Caco-2 (cell line): ENCODE measurements at regions of chr11 and their contacts with region 1.

Region 1: DNA sequence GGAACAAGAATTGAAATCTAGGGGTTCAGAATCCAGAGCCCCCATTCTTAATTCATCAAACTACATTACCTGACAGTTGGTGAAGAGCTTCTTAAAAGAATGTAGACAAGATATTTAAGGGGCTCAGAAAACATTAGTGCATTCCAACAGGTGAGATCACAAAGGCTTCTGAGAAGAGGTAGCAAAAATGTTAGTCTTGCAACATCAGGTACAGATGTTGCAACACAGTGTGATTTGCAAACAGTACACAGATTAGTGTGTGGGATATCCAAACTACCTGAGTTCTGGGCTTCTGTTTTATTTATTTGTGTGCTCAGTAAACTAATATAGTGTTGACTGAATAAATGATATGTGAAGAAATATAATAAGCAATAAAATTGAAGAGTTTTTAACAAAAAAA is 11.8 kb downstream of the CASP4 start:
- DNase-seq: peak in 1 of 2 experiments; percentile 64
- H3K4me3 ChIP-seq: no peak overlapping the region
- H3K4me3 Mint-ChIP-seq: no peak overlapping the region
- H3K27ac Mint-ChIP-seq: peak overlapping the region; percentile 60
- H3K4me1 ChIP-seq: peaks cover 18% of the 10 kb centered on the region
- H3K4me1 Mint-ChIP-seq: peaks cover 14% of the 10 kb centered on the region
- H3K27me3 ChIP-seq: no peaks in the 10 kb centered on the region
- H3K27me3 Mint-ChIP-seq: no peaks in the 10 kb centered on the region
- CTCF ChIP-seq: no peak

Region 2: DNA sequence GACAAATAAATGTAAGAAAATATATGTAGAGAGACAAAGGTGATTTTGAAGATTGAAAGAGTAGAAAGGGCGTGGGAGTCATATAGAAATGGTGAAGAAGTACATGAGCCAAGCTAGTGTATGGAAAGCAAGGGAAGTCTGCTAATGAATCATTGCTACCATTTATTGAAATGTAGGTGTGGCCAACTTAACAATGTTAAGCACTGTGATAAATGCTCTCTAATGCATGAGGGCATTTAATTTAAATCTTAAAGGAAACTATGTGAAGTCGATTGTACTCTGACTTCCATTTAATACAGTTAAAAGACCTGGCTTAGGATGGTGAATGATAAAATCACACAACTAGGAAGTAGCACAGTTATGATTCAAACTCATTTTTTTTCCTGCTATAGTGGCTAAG is 278.1 kb before region 1 on chr11:
- CTCF ChIA-PET with region 1: no interaction called
- POLR2A ChIA-PET with region 1: no interaction called
- intact Hi-C with region 1: no loop called
- DNase-seq: no peak
- H3K4me3 ChIP-seq: no peak overlapping the region
- H3K4me3 Mint-ChIP-seq: no peak overlapping the region
- H3K27ac Mint-ChIP-seq: no peak overlapping the region
- H3K4me1 ChIP-seq: no peaks in the 10 kb centered on the region
- H3K4me1 Mint-ChIP-seq: no peaks in the 10 kb centered on the region
- H3K27me3 ChIP-seq: no peaks in the 10 kb centered on the region
- H3K27me3 Mint-ChIP-seq: no peaks in the 10 kb centered on the region
- CTCF ChIP-seq: no peak

Region 3: GRCh38 chr11:104728927-104729326 is 227.6 kb before region 1 on chr11:
- CTCF ChIA-PET with region 1: no interaction called
- POLR2A ChIA-PET with region 1: no interaction called
- intact Hi-C with region 1: loop called (anchors 10 kb)
- DNase-seq: no peak
- H3K4me3 ChIP-seq: no peak overlapping the region
- H3K4me3 Mint-ChIP-seq: no peak overlapping the region
- H3K27ac Mint-ChIP-seq: no peak overlapping the region
- H3K4me1 ChIP-seq: peaks cover 17% of the 10 kb centered on the region
- H3K4me1 Mint-ChIP-seq: peaks cover 12% of the 10 kb centered on the region
- H3K27me3 ChIP-seq: no peaks in the 10 kb centered on the region
- H3K27me3 Mint-ChIP-seq: no peaks in the 10 kb centered on the region
- CTCF ChIP-seq: no peak

Region 4: DNA sequence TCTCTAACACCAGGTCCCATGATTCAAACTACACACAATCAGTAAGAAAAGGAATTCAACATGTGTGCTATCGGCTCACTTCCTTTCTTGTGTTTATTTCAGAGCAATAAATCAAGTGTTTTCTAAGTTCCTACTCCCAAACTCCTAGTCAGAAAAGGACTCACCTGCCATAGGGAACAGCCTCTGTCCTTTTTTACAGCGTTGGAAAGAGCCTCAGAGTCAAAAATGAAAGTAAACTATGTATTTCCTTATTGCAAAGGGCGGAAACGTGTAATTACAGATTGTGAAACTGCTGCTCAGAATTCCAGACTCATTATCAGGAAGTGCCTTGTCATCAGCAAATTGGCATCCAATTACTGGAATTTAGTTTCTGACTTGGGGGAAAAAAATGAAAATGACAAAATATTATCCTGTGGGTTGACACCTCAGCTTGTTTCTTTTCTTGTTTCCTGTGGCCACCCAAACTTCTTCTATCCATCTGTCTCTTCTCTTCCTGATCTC is 11.9 kb after region 1 on chr11 and contains the start of gene CASP4:
- CTCF ChIA-PET with region 1: no interaction called
- POLR2A ChIA-PET with region 1: no interaction called
- intact Hi-C with region 1: loop called (anchors 1 kb)
- DNase-seq: peak in 1 of 2 experiments; percentile 39
- H3K4me3 ChIP-seq: peak within 1 kb of the TSS; percentile 35
- H3K4me3 Mint-ChIP-seq: peak within 1 kb of the TSS; percentile 73
- H3K27ac Mint-ChIP-seq: peak within 1 kb of the TSS; percentile 85
- H3K4me1 ChIP-seq: peaks cover 30% of the 10 kb centered on the region
- H3K4me1 Mint-ChIP-seq: peaks cover 47% of the 10 kb centered on the region
- H3K27me3 ChIP-seq: no peaks in the 10 kb centered on the region
- H3K27me3 Mint-ChIP-seq: no peaks in the 10 kb centered on the region
- CTCF ChIP-seq: no peak
- total RNA-seq, gene CASP4: 41.7 and 42.0 TPM in 2 replicates